ENCODE measurements at regions of chr17 and their contacts with region 1.

Region 1: DNA sequence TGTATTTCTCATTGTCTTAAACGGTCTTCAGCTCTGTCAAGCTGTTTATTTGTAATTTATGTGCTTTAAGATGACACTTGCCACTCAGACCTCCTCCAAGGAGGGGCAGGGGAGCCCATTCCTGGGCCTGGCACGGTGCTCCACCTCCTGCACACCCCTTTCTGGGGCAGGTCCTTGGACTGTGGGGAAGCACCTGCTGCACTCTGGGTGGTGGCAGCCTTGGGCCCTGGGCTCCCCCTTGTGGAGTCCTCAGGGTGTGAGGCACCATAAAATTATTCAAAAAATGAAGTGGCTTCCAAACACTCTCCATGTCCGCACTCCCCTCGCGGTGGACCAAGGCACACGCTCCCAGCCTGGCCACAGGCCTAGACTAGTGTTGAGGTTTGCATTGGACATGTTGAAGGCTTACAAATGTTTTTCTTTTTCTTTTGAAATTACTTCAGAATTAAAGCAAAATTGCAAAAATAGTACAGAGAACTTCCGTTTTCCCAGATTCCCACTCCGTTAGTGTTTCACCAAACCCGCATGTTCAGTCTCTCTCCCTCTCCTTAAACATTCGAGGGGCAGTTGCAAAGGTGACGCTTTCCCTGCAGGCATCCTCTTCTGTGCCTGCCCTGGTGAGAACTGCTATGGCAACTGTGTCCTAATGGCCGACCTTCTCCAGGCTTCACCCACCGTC is 32.4 kb downstream of the FOXK2 start:
- DNase-seq: no peak
- ATAC-seq: peak; percentile 100
- H3K4me3 ChIP-seq: no peak overlapping the region
- H3K27ac ChIP-seq: no peak overlapping the region
- H3K4me1 ChIP-seq: peaks cover 31% of the 10 kb centered on the region
- H3K27me3 ChIP-seq: no peaks in the 10 kb centered on the region
- CTCF ChIP-seq: peak; percentile 89 to 97 (median 90)
- EP300 ChIP-seq: no peak
- POLR2A ChIP-seq: no peak; the same call in 1 of the 2 replicates
- RAD21 ChIP-seq: peak; percentile 95

Region 2: DNA sequence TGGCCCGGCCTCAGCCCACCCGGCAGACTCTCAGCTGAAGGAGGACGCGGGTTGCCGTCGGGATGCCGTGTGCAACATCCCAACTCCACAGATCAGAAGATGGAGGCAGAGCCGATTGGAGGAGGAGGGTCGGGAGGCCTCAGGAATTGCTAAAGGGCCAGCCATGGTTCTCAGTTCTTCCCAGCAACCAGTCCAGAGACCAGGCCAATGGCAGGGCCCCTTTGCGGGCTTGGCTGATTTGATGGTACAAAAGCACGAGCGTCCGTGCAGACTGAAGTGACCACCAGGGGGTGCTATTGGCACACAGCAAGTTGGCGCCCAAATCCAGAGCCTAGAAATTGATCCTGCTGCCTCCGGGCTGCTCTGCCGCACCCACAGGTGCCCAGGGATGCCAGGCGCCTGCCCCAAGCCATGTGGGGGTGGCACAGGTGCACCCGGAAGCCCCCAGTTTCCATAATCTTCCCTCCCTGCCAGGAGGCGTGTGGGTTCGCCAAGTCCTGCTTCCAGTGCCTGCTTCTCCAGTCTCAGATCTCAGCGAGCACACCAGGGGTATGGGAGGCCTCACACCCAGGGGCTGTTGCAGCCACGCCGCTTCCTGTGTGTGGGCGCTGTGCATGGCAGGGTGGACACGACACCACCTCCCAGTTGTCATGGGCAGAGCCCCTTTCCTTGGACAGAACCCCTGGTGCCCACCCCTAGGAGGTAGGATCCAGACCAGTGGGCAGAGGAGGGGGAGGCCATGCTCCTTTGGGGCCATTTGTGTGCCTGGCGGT is 200.0 kb before region 1 on chr17:
- CTCF ChIA-PET with region 1: interaction called, 8 read pairs
- POLR2A ChIA-PET with region 1: no interaction called
- RAD21 ChIA-PET with region 1: interaction called, 16 read pairs
- SMC1A ChIA-PET with region 1: no interaction called
- in situ Hi-C with region 1: loop called (anchors 5 kb)
- intact Hi-C with region 1: loop called (anchors 2 kb)
- DNase-seq: no peak
- ATAC-seq: peak; percentile 93
- H3K4me3 ChIP-seq: no peak overlapping the region
- H3K27ac ChIP-seq: no peak overlapping the region
- H3K4me1 ChIP-seq: peaks cover 15% of the 10 kb centered on the region
- H3K27me3 ChIP-seq: no peaks in the 10 kb centered on the region
- CTCF ChIP-seq: peak; percentile 92 to 93 (median 92)
- EP300 ChIP-seq: no peak
- POLR2A ChIP-seq: no peak
- RAD21 ChIP-seq: peak; percentile 86

Region 3: GRCh38 chr17:82480318-82480717 is 71.6 kb before region 1 on chr17:
- CTCF ChIA-PET with region 1: interaction called, 16 read pairs
- POLR2A ChIA-PET with region 1: no interaction called
- RAD21 ChIA-PET with region 1: no interaction called
- SMC1A ChIA-PET with region 1: interaction called, 3 read pairs
- in situ Hi-C with region 1: no loop called
- intact Hi-C with region 1: no loop called
- DNase-seq: no peak
- ATAC-seq: no peak
- H3K4me3 ChIP-seq: no peak overlapping the region
- H3K27ac ChIP-seq: no peak overlapping the region
- H3K4me1 ChIP-seq: no peaks in the 10 kb centered on the region
- H3K27me3 ChIP-seq: no peaks in the 10 kb centered on the region
- CTCF ChIP-seq: no peak
- EP300 ChIP-seq: no peak
- POLR2A ChIP-seq: no peak
- RAD21 ChIP-seq: no peak

Region 4: GRCh38 chr17:82507631-82508175 is 44.2 kb before region 1 on chr17:
- CTCF ChIA-PET with region 1: interaction called, 14 read pairs
- POLR2A ChIA-PET with region 1: no interaction called
- RAD21 ChIA-PET with region 1: interaction called, 5 read pairs
- SMC1A ChIA-PET with region 1: interaction called, 4 read pairs
- in situ Hi-C with region 1: no loop called
- intact Hi-C with region 1: no loop called
- DNase-seq: no peak
- ATAC-seq: no peak
- H3K4me3 ChIP-seq: no peak overlapping the region
- H3K27ac ChIP-seq: no peak overlapping the region; the same call in 1 of the 2 replicates
- H3K4me1 ChIP-seq: peaks cover 11% of the 10 kb centered on the region
- H3K27me3 ChIP-seq: no peaks in the 10 kb centered on the region
- CTCF ChIP-seq: no peak
- EP300 ChIP-seq: no peak
- POLR2A ChIP-seq: no peak
- RAD21 ChIP-seq: no peak

Region 5: DNA sequence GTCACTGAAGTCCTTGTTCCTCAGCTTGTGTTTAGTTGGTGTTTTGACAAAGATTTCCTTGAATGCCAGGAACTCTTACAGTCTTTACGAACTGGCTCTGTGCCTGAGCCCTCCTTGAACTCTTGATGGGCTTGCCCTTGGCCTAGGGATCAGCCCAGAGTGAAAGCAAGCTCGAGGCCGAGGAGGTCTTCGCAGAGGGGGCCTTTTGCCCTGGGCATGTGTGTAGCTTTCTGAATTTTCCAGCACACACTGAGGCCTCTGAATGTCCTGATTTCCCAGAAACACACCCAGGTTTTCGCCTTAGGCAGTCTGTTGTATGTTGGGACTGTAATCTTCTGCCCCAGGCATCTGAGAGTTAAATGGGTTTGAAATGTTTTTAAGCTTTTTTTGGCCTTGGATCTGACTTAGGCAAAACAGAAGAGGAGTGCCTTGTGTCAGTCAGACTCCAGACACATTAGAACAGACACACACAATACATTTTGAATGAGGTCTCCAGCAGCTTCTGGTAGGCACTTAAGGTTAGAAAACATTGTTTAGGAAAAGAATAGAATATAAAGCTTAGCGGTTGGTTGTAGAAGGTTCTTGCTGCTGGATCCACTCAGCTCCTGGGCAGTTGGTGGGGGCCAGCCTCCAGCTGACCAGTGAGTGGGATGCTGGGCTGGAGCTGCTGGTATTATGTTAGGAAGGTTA is 15.3 kb before region 1 on chr17:
- CTCF ChIA-PET with region 1: interaction called, 20 read pairs
- POLR2A ChIA-PET with region 1: interaction called, 6 read pairs
- RAD21 ChIA-PET with region 1: no interaction called
- SMC1A ChIA-PET with region 1: interaction called, 11 read pairs
- in situ Hi-C with region 1: no loop called
- intact Hi-C with region 1: no loop called
- DNase-seq: no peak
- ATAC-seq: no peak
- H3K4me3 ChIP-seq: no peak overlapping the region
- H3K27ac ChIP-seq: peak overlapping the region; percentile 28
- H3K4me1 ChIP-seq: peaks cover 46% of the 10 kb centered on the region
- H3K27me3 ChIP-seq: no peaks in the 10 kb centered on the region
- CTCF ChIP-seq: no peak
- EP300 ChIP-seq: no peak
- POLR2A ChIP-seq: no peak
- RAD21 ChIP-seq: no peak

Region 6: GRCh38 chr17:82592767-82593589 is 41.1 kb after region 1 on chr17:
- CTCF ChIA-PET with region 1: no interaction called
- POLR2A ChIA-PET with region 1: no interaction called
- RAD21 ChIA-PET with region 1: no interaction called
- SMC1A ChIA-PET with region 1: no interaction called
- in situ Hi-C with region 1: no loop called
- intact Hi-C with region 1: no loop called
- DNase-seq: peak; percentile 30
- ATAC-seq: peak; percentile 47
- H3K4me3 ChIP-seq: peak overlapping the region; percentile 47
- H3K27ac ChIP-seq: peak overlapping the region; percentile 59; the same call in 1 of the 2 replicates
- H3K4me1 ChIP-seq: peaks cover 17% of the 10 kb centered on the region
- H3K27me3 ChIP-seq: no peaks in the 10 kb centered on the region
- CTCF ChIP-seq: no peak
- EP300 ChIP-seq: no peak
- POLR2A ChIP-seq: no peak
- RAD21 ChIP-seq: no peak

Measured in GM12878 (cell line).